Activated naive CD8-positive, alpha-beta T cell treated with anti-CD3 and anti-CD28 coated beads, Interleukin-2, amount 10 ng/mL, durations not matched to agents 7 days and 5 days (primary cell): ENCODE measurements at regions of chr1 and their contacts with region 1.

Region 1: DNA sequence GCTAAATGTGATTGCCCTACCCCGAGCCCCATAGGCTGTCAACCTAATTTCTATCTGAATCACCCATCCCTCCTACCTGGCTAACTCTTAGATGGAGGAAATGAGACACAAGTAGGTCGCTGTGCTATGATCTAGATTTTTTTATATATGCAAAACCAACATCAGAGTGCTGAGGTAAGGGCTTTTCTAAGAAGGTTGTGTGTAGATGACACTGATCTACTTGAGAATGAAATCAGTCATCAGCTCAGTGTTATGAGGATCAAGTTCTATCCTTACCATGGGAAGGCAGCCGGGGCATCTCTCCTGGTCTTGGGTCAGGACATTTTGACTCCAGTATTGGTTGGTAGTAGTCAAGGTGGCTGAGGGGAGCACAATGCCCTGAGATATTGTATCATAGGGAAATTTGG is 23.6 kb downstream of the SLAMF1 start:
- DNase-seq: no peak
- ATAC-seq: peak; percentile 68
- H3K4me3 Mint-ChIP-seq: peak overlapping the region; percentile 72
- H3K27ac Mint-ChIP-seq: peak overlapping the region; percentile 97
- H3K4me1 Mint-ChIP-seq: peaks cover 86% of the 10 kb centered on the region
- H3K27me3 Mint-ChIP-seq: no peaks in the 10 kb centered on the region

Region 2: GRCh38 chr1:160637821-160638539 is 14.8 kb after region 1 on chr1:
- POLR2A ChIA-PET with region 1: interaction called, 22 read pairs
- DNase-seq: no peak
- ATAC-seq: peak; percentile 65
- H3K4me3 Mint-ChIP-seq: peak overlapping the region; percentile 84
- H3K27ac Mint-ChIP-seq: peak overlapping the region; percentile 96
- H3K4me1 Mint-ChIP-seq: peaks cover 76% of the 10 kb centered on the region
- H3K27me3 Mint-ChIP-seq: no peaks in the 10 kb centered on the region

Region 3: DNA sequence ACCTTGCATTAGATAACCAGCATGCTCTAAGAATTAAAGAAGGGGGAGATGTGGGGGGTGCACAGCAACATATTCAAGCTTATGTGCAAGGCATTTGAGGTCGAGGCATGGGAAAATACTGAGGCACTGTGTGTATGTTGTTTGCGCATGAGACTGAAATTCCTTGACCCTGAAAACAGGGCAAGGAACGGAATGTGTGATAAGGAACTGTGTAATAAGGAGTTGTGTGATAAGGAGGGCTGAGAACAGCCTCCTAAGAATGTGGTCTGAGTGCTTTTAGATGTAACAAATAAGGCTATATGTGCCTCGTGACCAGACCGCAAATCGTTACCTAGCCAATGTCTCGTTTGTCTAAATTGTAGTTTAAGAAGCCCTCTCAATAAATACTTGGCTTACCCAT is 288.2 kb after region 1 on chr1:
- POLR2A ChIA-PET with region 1: no interaction called
- DNase-seq: no peak
- ATAC-seq: no peak
- H3K4me3 Mint-ChIP-seq: no peak overlapping the region
- H3K27ac Mint-ChIP-seq: no peak overlapping the region
- H3K4me1 Mint-ChIP-seq: no peaks in the 10 kb centered on the region
- H3K27me3 Mint-ChIP-seq: peaks cover 10% of the 10 kb centered on the region